Activated T-helper 2 cell treated with anti-CD3 and anti-CD28 coated beads, Interferon-gamma antibody, Interleukin-2, Interleukin-4, amounts not matched to agents 10 μg/mL and 5 μg/mL and 100 μg/mL, durations not matched to agents 14 hours and 24 hours and 36 hours (primary cell): ENCODE measurements at regions of chr14 and their contacts with region 1.

Region 1: GRCh38 chr14:92677087-92677668 is 71.2 kb downstream of the LGMN start:
- DNase-seq: no peak
- H3K4me3 Mint-ChIP-seq: no peak overlapping the region
- H3K27ac Mint-ChIP-seq: peak overlapping the region; percentile 58
- H3K4me1 Mint-ChIP-seq: peaks cover 41% of the 10 kb centered on the region
- H3K27me3 Mint-ChIP-seq: no peaks in the 10 kb centered on the region

Region 2: DNA sequence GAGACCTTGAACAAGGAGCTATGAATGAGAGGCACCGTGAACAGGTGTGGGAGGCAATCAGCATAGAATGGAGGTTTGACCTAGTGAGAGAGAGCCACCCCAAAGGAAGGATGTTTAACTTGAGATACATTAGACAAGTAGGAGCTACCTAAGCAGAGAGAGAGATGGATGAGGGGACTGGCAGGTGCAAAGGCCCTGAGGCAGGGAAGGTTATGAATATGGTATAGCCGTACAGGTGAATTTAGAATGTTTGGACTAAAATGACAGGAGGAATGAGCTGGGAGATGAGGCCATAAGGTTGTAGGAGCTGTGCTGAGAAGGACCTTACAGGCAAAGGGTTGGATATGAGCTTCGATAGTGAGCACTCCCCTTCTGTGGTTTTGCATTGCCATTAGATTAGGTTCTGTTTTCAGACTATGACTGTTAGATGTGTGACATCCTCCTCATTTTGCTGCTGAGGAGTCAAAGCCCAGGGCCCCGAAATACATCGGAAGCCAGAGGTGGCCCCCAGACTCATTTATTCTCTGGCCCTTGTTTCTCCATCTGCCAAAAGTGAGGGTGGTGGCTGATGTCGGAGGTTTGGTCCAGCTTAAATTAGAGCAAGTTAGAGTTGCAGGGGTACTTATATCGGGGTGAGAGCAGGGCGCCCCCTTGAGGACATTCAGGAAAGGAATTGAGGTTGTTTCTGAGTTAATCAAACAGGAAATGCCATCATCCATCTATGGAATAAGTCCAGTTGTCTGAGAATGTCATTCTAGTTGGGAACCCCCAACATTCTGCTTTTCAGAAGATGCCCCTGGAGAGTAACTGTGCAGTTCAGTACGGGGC is 324.8 kb before region 1 on chr14:
- intact Hi-C with region 1: loop called (anchors 10 kb)
- DNase-seq: peak; percentile 17
- H3K4me3 Mint-ChIP-seq: no peak overlapping the region
- H3K27ac Mint-ChIP-seq: no peak overlapping the region
- H3K4me1 Mint-ChIP-seq: no peaks in the 10 kb centered on the region
- H3K27me3 Mint-ChIP-seq: peaks cover 21% of the 10 kb centered on the region

Region 3: DNA sequence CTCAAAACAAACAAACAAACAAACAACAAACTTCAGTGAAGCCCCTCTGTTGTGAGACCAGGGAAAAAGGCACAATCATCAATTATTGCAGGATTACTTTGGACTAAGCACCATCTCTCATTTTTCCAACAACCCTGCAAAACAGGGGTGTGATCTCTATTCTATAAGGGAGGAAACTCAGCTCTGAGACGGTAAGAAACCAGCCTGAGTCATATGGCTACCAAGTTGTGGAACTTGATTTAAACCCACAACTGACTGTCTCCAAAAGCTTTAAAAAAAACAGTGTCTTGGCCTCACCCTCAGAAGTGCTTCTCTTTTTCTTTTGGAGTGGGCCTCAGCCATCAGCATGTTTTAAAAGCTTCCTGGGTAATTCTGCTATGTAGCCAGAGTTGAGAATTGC is 113.8 kb before region 1 on chr14:
- intact Hi-C with region 1: loop called (anchors 2 kb)
- DNase-seq: no peak
- H3K4me3 Mint-ChIP-seq: no peak overlapping the region
- H3K27ac Mint-ChIP-seq: no peak overlapping the region
- H3K4me1 Mint-ChIP-seq: peaks cover 42% of the 10 kb centered on the region
- H3K27me3 Mint-ChIP-seq: peaks cover 39% of the 10 kb centered on the region

Region 4: GRCh38 chr14:92615451-92615850 is 61.7 kb before region 1 on chr14:
- intact Hi-C with region 1: loop called (anchors 2 kb)
- DNase-seq: peak; percentile 75
- H3K4me3 Mint-ChIP-seq: no peak overlapping the region
- H3K27ac Mint-ChIP-seq: no peak overlapping the region
- H3K4me1 Mint-ChIP-seq: peaks cover 28% of the 10 kb centered on the region
- H3K27me3 Mint-ChIP-seq: no peaks in the 10 kb centered on the region